Aorta (tissue), 5 donors: ENCODE measurements at regions of chr4 and their contacts with region 1.

Region 1: GRCh38 chr4:24551492-24552289 is 32.7 kb downstream of the DHX15 start:
- DNase-seq: no peak
- ATAC-seq: no peak
- H3K4me3 ChIP-seq: no peak overlapping the region
- H3K27ac ChIP-seq: no peak overlapping the region
- H3K4me1 ChIP-seq: no peaks in the 10 kb centered on the region
- H3K27me3 ChIP-seq: no peaks in the 10 kb centered on the region

Region 2: GRCh38 chr4:24809376-24809775 is 257.7 kb after region 1 on chr4:
- intact Hi-C with region 1: loop called in 1 of 2 experiments (anchors 10 kb)
- DNase-seq: no peak
- ATAC-seq: peak; percentile 5
- H3K4me3 ChIP-seq: no peak overlapping the region
- H3K27ac ChIP-seq: peak overlapping the region in 1 of 2 donors; percentile 23
- H3K4me1 ChIP-seq: peaks cover 3 to 5% of the 10 kb centered on the region in 2 donors
- H3K27me3 ChIP-seq: no peaks in the 10 kb centered on the region